GM12878 (cell line): ENCODE measurements at regions of chr4 and their contacts with region 1.

Region 1: GRCh38 chr4:119490335-119490734 is 138.3 kb downstream of the PDE5A start:
- DNase-seq: no peak
- ATAC-seq: peak; percentile 73
- H3K4me3 ChIP-seq: no peak overlapping the region
- H3K27ac ChIP-seq: no peak overlapping the region
- H3K4me1 ChIP-seq: no peaks in the 10 kb centered on the region
- H3K27me3 ChIP-seq: no peaks in the 10 kb centered on the region
- CTCF ChIP-seq: peak; percentile 25 to 31 (median 26); a peak in 2 of 6 replicates
- EP300 ChIP-seq: no peak
- POLR2A ChIP-seq: no peak
- RAD21 ChIP-seq: peak; percentile 43

Region 2: DNA sequence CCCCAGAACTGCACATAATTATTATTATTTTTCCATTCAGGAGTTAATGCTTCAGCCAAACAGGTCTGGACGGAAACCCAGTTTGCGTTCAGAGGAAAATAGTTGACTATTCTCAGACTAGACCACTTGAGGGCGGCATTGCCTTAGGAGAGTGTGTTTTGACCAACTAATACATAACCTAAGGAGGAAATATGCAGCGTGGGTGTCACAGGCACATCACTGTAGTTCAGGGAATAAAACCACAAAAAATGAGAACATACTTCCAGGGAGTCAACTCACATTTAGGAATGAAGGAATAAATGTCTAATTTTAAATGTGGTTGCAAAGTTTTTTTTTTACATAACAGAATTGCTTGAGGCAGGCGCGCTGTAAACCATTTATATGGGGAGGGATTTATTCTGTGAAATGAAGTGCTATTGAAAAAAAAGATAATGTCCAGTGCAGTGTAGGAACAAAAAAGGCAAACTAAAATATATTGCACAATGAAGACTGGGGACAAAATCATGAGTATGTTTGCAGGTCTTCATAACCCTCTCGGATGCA is 508.4 kb before region 1 on chr4:
- CTCF ChIA-PET with region 1: interaction called, 5 read pairs
- POLR2A ChIA-PET with region 1: no interaction called
- RAD21 ChIA-PET with region 1: interaction called, 3 read pairs
- SMC1A ChIA-PET with region 1: interaction called, 3 read pairs
- in situ Hi-C with region 1: no loop called
- intact Hi-C with region 1: loop called (anchors 5 kb)
- DNase-seq: no peak
- ATAC-seq: peak; percentile 94
- H3K4me3 ChIP-seq: no peak overlapping the region
- H3K27ac ChIP-seq: no peak overlapping the region
- H3K4me1 ChIP-seq: no peaks in the 10 kb centered on the region
- H3K27me3 ChIP-seq: no peaks in the 10 kb centered on the region
- CTCF ChIP-seq: peak; percentile 70 to 80 (median 79)
- EP300 ChIP-seq: no peak
- POLR2A ChIP-seq: no peak
- RAD21 ChIP-seq: peak; percentile 98

Region 3: GRCh38 chr4:119041951-119042560 is 448.3 kb before region 1 on chr4:
- CTCF ChIA-PET with region 1: interaction called, 28 read pairs
- POLR2A ChIA-PET with region 1: no interaction called
- RAD21 ChIA-PET with region 1: interaction called, 9 read pairs
- SMC1A ChIA-PET with region 1: interaction called, 6 read pairs
- in situ Hi-C with region 1: loop called (anchors 10 kb)
- intact Hi-C with region 1: loop called (anchors 5 kb)
- DNase-seq: peak; percentile 12
- ATAC-seq: peak; percentile 95
- H3K4me3 ChIP-seq: no peak overlapping the region
- H3K27ac ChIP-seq: no peak overlapping the region
- H3K4me1 ChIP-seq: peaks cover 6% of the 10 kb centered on the region; the same call in 1 of the 2 replicates
- H3K27me3 ChIP-seq: peaks cover 0 to 2% of the 10 kb centered on the region in 2 experiments; a peak in 1 of 4 replicates
- CTCF ChIP-seq: peak; percentile 57 to 62 (median 58)
- EP300 ChIP-seq: no peak
- POLR2A ChIP-seq: no peak
- RAD21 ChIP-seq: peak; percentile 78

Region 4: DNA sequence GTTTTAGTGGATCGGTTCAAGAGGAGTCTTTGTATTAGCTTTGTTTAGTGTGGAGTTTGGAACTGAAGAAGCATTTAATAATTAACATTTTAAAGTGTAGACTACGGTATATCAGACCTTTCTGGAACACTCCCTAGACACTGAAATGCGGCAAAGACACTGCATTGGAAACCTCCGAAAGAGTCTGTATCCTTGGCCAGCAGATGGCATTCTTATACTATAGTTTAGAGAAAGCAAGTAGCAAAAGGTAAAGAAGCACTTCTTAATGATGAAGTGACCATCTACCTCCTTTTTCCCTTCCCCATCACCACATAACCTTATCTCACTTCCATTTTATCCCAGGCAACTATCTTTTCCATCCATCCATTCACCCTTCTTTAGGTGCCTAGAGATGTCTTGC is 176.0 kb before region 1 on chr4:
- CTCF ChIA-PET with region 1: interaction called, 12 read pairs
- POLR2A ChIA-PET with region 1: no interaction called
- RAD21 ChIA-PET with region 1: no interaction called
- SMC1A ChIA-PET with region 1: interaction called, 6 read pairs
- in situ Hi-C with region 1: no loop called
- intact Hi-C with region 1: loop called (anchors 5 kb)
- DNase-seq: no peak
- ATAC-seq: peak; percentile 81
- H3K4me3 ChIP-seq: no peak overlapping the region
- H3K27ac ChIP-seq: no peak overlapping the region
- H3K4me1 ChIP-seq: no peaks in the 10 kb centered on the region
- H3K27me3 ChIP-seq: no peaks in the 10 kb centered on the region; a peak in 1 of 4 replicates
- CTCF ChIP-seq: peak; percentile 41 to 56 (median 43); a peak in 5 of 6 replicates
- EP300 ChIP-seq: no peak
- POLR2A ChIP-seq: no peak
- RAD21 ChIP-seq: peak; percentile 77